Activated CD8-positive, alpha-beta T cell treated with anti-CD3 and anti-CD28 coated beads, Interleukin-2, amount 10 ng/mL, durations not matched to agents 7 days and 5 days (primary cell): ENCODE measurements at regions of chr4 and their contacts with region 1.

Region 1: GRCh38 chr4:77193511-77194102 is 36.6 kb downstream of the CCNG2 start:
- DNase-seq: peak; percentile 82
- ATAC-seq: peak; percentile 99
- H3K4me3 Mint-ChIP-seq: peak overlapping the region; percentile 71
- H3K27ac Mint-ChIP-seq: peak overlapping the region; percentile 82
- H3K4me1 Mint-ChIP-seq: peaks cover 20% of the 10 kb centered on the region
- H3K27me3 Mint-ChIP-seq: peaks cover 3% of the 10 kb centered on the region

Region 2: DNA sequence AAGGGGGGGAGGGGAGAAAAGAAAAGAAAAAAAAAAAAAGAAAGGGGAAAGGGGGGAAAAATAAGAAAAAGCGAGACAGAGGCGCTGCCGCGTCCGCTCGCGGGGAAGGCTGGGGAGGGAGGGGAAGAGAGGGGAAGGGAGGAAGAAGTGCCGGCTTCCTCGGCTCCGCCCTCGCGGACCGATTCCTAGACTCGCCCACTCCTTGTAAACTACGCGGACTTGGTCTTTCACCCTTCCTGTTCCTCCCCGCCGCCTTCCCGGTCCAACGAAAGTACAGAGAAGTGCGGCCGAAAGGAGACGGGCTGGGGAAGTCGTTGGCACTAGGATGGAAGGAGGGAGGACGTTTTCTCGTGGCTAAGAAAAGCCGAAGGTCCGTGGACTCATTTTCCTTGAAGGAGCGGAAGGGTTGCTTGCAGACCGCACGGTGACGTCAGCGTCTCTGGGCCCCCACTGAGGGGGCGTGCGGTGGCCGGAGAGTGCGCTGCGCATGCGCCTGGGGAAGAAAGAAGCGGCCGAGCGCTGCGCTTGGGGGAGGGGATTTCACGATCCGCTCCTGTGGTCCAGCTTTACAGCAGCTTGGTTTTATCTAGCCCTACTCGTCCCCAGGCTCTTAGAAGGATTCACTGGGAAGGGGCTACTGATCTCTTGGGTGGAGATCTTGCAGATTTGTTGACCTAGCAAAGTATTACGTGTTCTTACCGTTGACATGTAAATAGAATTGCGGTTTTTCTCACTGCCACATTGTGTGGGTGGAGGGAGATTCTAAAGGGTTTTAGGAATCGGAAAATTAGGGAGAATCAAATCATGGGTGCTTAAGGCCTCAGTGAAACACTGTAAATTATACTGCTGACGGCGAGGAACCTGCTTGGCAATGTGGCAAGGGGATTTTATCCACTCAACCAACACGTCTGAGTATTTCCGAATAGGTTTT is 117.5 kb before region 1 on chr4 and contains the start of gene CCNI:
- CTCF ChIA-PET with region 1: interaction called, 3 read pairs
- POLR2A ChIA-PET with region 1: interaction called, 11 read pairs
- DNase-seq: peak; percentile 95
- ATAC-seq: peak; percentile 83
- H3K4me3 Mint-ChIP-seq: no peak within 1 kb of the TSS
- H3K27ac Mint-ChIP-seq: peak within 1 kb of the TSS; percentile 100
- H3K4me1 Mint-ChIP-seq: peaks cover 38% of the 10 kb centered on the region
- H3K27me3 Mint-ChIP-seq: no peaks in the 10 kb centered on the region
- total RNA-seq, gene CCNI: 203 to 216 TPM

Region 3: GRCh38 chr4:77172336-77172735 is 21.3 kb before region 1 on chr4:
- CTCF ChIA-PET with region 1: no interaction called
- POLR2A ChIA-PET with region 1: no interaction called
- DNase-seq: no peak
- ATAC-seq: no peak
- H3K4me3 Mint-ChIP-seq: no peak overlapping the region
- H3K27ac Mint-ChIP-seq: no peak overlapping the region
- H3K4me1 Mint-ChIP-seq: no peaks in the 10 kb centered on the region
- H3K27me3 Mint-ChIP-seq: no peaks in the 10 kb centered on the region